Gastrocnemius medialis (tissue), 4 donors: ENCODE measurements at regions of chr17 and their contacts with region 1.

Region 1: GRCh38 chr17:51015145-51015558 is 105.5 kb downstream of the SPAG9 start:
- DNase-seq: no peak
- ATAC-seq: no peak
- H3K4me3 ChIP-seq: no peak overlapping the region
- H3K27ac ChIP-seq: peak overlapping the region in 2 of 4 donors; percentile 1 to 28
- H3K4me1 ChIP-seq: peaks cover 7 to 8% of the 10 kb centered on the region in 2 donors
- H3K27me3 ChIP-seq: no peaks in the 10 kb centered on the region
- CTCF ChIP-seq: no peak
- POLR2A ChIP-seq: no peak

Region 2: GRCh38 chr17:50589095-50589705 is 426.0 kb before region 1 on chr17:
- in situ Hi-C with region 1: no loop called
- intact Hi-C with region 1: no loop called
- DNase-seq: no peak
- ATAC-seq: no peak
- H3K4me3 ChIP-seq: no peak overlapping the region
- H3K27ac ChIP-seq: no peak overlapping the region
- H3K4me1 ChIP-seq: peaks cover 8 to 14% of the 10 kb centered on the region in 2 donors
- H3K27me3 ChIP-seq: no peaks in the 10 kb centered on the region
- CTCF ChIP-seq: no peak
- POLR2A ChIP-seq: no peak

Region 3: DNA sequence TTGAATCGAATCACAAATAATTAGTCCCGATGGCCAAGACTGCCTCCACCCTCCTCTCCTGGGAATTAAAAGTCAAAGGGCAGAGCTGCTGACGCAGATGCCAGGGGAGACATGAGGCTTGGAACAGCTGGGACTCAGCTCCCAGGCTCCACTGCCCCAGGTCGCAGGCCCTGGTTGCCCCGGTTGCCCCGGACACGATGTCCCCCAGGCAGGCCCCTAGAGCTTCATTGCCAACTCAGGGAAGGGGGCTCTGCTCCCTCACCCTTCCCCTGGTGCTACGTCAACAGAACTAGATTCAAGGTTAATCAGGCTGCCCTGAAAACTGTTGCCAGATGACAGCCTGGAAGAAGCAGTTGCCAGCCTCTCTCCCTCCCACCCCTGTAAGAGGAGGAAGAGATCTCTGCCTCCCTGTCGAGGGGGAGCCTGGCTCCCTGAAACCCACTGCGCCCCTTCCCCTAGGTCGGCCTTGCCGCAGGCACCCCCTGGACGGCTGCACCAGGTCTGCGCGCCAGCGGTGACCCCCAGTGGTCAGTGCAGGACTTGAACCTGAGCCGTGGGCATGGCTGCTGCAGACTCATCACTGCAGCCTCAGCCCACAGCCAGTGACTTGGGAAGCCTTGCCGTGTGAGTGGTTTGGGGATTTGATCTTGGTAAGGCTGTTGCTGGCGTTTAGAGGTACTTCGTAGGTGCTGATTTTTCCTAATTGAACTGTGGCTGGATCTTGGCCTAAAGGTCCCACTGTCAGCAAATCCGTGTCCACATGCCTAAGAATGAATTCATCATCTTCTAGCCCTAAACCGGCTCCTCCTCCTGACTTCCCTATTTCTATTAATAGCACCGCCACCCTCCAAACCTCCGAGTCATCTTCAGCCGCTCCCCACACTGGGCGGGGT is 64.9 kb before region 1 on chr17:
- in situ Hi-C with region 1: no loop called
- intact Hi-C with region 1: no loop called
- DNase-seq: peak; percentile 87 to 97
- ATAC-seq: peak; percentile 55 to 70
- H3K4me3 ChIP-seq: peak overlapping the region; percentile 4 to 32 (median 21)
- H3K27ac ChIP-seq: peak overlapping the region; percentile 98 to 100 (median 100)
- H3K4me1 ChIP-seq: peaks cover 59 to 70% of the 10 kb centered on the region in 2 donors
- H3K27me3 ChIP-seq: no peaks in the 10 kb centered on the region
- CTCF ChIP-seq: peak; percentile 79 to 96 (median 86)
- POLR2A ChIP-seq: peak; percentile 29 to 47

Region 4: DNA sequence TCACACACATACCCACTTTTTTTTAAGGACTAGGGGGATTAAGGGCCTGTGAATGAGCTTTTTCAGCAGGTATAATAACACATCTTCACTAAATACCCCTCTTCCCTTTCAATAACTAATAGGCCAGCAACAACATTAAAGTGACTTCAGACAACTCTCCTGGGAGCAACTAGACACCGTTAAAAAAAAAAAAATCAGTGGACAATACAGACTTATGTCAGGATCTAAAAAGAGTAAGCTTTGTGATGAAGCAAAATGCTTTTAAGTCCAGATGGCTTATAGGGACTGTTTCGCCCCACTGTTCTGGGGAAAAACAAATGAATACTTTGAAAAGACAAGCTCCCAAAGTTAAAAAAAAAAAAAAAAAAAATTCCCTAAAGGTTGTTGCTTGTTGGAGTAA is 76.5 kb after region 1 on chr17:
- in situ Hi-C with region 1: no loop called
- intact Hi-C with region 1: loop called (anchors 5 kb)
- DNase-seq: no peak
- ATAC-seq: peak; percentile 72 to 90
- H3K4me3 ChIP-seq: peak overlapping the region in 1 of 4 donors; percentile 9
- H3K27ac ChIP-seq: peak overlapping the region; percentile 51 to 68 (median 60)
- H3K4me1 ChIP-seq: peaks cover 34 to 50% of the 10 kb centered on the region in 2 donors
- H3K27me3 ChIP-seq: no peaks in the 10 kb centered on the region
- CTCF ChIP-seq: no peak
- POLR2A ChIP-seq: no peak